GM12878 (cell line): ENCODE measurements at regions of chr2 and their contacts with region 1.

Region 1: GRCh38 chr2:67616749-67617148 is 219.6 kb downstream of the ETAA1 start:
- DNase-seq: peak; percentile 9
- ATAC-seq: peak; percentile 90
- H3K4me3 ChIP-seq: no peak overlapping the region
- H3K27ac ChIP-seq: no peak overlapping the region
- H3K4me1 ChIP-seq: no peaks in the 10 kb centered on the region
- H3K27me3 ChIP-seq: no peaks in the 10 kb centered on the region
- CTCF ChIP-seq: no peak
- EP300 ChIP-seq: peak in 1 of 2 experiments; percentile 31; a peak in 1 of 4 replicates
- POLR2A ChIP-seq: no peak
- RAD21 ChIP-seq: no peak

Region 2: GRCh38 chr2:67631483-67631882 is 14.7 kb after region 1 on chr2:
- CTCF ChIA-PET with region 1: no interaction called
- POLR2A ChIA-PET with region 1: no interaction called
- RAD21 ChIA-PET with region 1: no interaction called
- SMC1A ChIA-PET with region 1: no interaction called
- in situ Hi-C with region 1: no loop called
- intact Hi-C with region 1: no loop called
- DNase-seq: no peak
- ATAC-seq: no peak
- H3K4me3 ChIP-seq: no peak overlapping the region
- H3K27ac ChIP-seq: no peak overlapping the region
- H3K4me1 ChIP-seq: no peaks in the 10 kb centered on the region
- H3K27me3 ChIP-seq: no peaks in the 10 kb centered on the region
- CTCF ChIP-seq: no peak
- EP300 ChIP-seq: no peak
- POLR2A ChIP-seq: no peak
- RAD21 ChIP-seq: no peak

Region 3: DNA sequence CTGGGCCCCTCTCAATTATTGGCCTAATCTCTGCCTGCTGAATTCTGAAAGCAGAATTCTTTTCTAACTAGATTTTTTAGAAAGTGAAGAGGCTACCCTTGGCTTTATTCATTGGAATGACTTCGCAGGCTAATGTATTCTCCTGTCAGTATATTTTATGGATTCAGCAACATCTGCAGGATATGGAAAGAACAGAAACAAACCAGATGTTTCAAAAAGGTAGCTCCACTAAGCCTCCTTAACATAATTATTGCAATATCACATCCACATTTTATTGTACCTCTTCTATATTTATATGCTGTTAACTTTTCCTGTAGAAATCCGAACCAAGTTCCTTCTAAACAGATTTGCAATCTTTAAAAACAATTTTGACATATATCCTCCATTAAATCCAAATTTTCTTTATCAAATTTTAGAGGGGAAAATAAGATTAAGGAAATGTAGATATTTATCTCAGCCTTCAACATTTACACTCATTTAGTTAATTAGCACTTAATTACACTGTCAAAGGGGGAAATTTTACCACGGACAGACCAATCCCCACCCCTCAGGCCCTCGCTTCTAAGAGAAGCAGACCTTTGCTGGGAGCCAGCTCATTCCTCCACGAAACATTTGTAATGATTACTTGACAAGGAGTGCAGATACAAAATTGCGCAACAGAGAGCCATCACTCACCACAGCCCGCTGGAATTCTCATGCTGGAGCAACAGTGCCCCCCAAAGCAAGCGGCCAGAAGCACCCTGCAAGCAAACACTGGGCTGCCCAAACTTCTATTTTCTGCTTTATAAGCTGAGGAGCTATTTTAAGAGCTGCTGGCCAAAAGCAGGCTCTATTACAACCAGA is 33.8 kb after region 1 on chr2:
- CTCF ChIA-PET with region 1: no interaction called
- POLR2A ChIA-PET with region 1: no interaction called
- RAD21 ChIA-PET with region 1: no interaction called
- SMC1A ChIA-PET with region 1: no interaction called
- in situ Hi-C with region 1: no loop called
- intact Hi-C with region 1: no loop called
- DNase-seq: no peak
- ATAC-seq: peak; percentile 60
- H3K4me3 ChIP-seq: no peak overlapping the region
- H3K27ac ChIP-seq: no peak overlapping the region
- H3K4me1 ChIP-seq: no peaks in the 10 kb centered on the region
- H3K27me3 ChIP-seq: no peaks in the 10 kb centered on the region
- CTCF ChIP-seq: peak; percentile 12 to 23 (median 20); a peak in 2 of 6 replicates
- EP300 ChIP-seq: no peak
- POLR2A ChIP-seq: no peak
- RAD21 ChIP-seq: peak; percentile 67

Region 4: GRCh38 chr2:67689186-67689585 is 72.4 kb after region 1 on chr2:
- CTCF ChIA-PET with region 1: no interaction called
- POLR2A ChIA-PET with region 1: no interaction called
- RAD21 ChIA-PET with region 1: no interaction called
- SMC1A ChIA-PET with region 1: no interaction called
- in situ Hi-C with region 1: no loop called
- intact Hi-C with region 1: loop called (anchors 2 kb)
- DNase-seq: no peak
- ATAC-seq: no peak
- H3K4me3 ChIP-seq: no peak overlapping the region
- H3K27ac ChIP-seq: no peak overlapping the region
- H3K4me1 ChIP-seq: no peaks in the 10 kb centered on the region
- H3K27me3 ChIP-seq: no peaks in the 10 kb centered on the region
- CTCF ChIP-seq: no peak
- EP300 ChIP-seq: no peak
- POLR2A ChIP-seq: no peak
- RAD21 ChIP-seq: no peak

Region 5: GRCh38 chr2:68673631-68674030 is 1056.9 kb after region 1 on chr2:
- CTCF ChIA-PET with region 1: no interaction called
- POLR2A ChIA-PET with region 1: no interaction called
- RAD21 ChIA-PET with region 1: no interaction called
- SMC1A ChIA-PET with region 1: no interaction called
- in situ Hi-C with region 1: no loop called
- intact Hi-C with region 1: no loop called
- DNase-seq: no peak
- ATAC-seq: no peak
- H3K4me3 ChIP-seq: no peak overlapping the region
- H3K27ac ChIP-seq: no peak overlapping the region
- H3K4me1 ChIP-seq: no peaks in the 10 kb centered on the region
- H3K27me3 ChIP-seq: no peaks in the 10 kb centered on the region
- CTCF ChIP-seq: no peak
- EP300 ChIP-seq: no peak
- POLR2A ChIP-seq: no peak
- RAD21 ChIP-seq: no peak